ENCODE measurements at regions of chr10 and their contacts with region 1.

Region 1: DNA sequence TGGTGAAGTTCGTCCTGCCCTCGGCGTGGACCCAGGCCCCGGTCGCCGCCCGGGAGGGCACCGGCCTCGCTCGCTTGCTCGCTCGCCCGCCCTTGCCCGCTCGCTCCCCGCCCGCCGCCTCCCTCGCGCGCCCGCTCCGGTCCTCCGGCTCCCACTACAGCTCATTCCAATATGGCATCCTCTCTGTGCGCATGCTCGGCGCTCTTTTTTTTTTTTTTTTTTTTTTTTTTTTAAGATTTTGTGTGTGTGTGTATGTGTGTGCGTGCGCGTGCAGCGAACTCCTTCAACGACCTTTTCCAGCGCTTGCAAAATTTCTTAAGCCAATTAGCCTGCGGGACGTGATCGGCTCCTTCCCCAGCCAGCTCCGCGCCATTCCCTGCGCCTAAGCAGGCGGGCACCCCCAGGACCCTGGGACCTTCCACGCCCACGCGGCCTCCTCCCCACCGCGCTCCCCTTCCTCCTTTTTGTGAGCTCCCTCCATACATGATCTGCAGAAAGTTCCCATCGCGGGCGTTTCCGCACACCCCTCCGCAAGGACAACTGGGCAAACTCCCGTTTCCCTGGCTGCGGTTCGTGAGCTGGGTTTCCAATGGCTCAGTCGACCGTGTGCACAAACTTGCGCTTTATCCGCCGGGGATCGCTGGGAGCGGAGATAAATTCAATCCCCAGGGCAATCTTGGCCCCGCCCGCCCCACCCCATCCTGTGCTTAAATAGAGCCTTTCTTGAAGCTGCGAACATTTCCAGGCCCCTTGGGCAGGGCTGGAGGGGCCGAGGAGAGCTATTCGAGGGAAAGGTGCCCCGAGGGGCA is at the start of gene SFMBT2:
- DNase-seq: peak; percentile 64
- H3K4me3 ChIP-seq: peak within 1 kb of the TSS; percentile 53 to 71 (median 60)
- H3K27ac ChIP-seq: no peak within 1 kb of the TSS
- H3K4me1 ChIP-seq: peaks cover 29% of the 10 kb centered on the region
- H3K27me3 ChIP-seq: peaks cover 54% of the 10 kb centered on the region
- CTCF ChIP-seq: peak in 1 of 2 donors; percentile 27
- total RNA-seq, gene SFMBT2: 1.5 to 2.2 TPM

Region 2: GRCh38 chr10:6667679-6668270 is 743.3 kb before region 1 on chr10:
- CTCF ChIA-PET with region 1: interaction called, 21 read pairs
- dilution Hi-C with region 1: no loop called
- in situ Hi-C with region 1: loop called in 1 of 2 experiments (anchors 10 kb)
- intact Hi-C with region 1: no loop called
- DNase-seq: peak; percentile 37
- H3K4me3 ChIP-seq: no peak overlapping the region
- H3K27ac ChIP-seq: no peak overlapping the region
- H3K4me1 ChIP-seq: peaks cover 4% of the 10 kb centered on the region
- H3K27me3 ChIP-seq: peaks cover 2% of the 10 kb centered on the region
- CTCF ChIP-seq: peak; percentile 60 to 76

Region 3: GRCh38 chr10:6838118-6838517 is 572.9 kb before region 1 on chr10:
- CTCF ChIA-PET with region 1: no interaction called
- dilution Hi-C with region 1: no loop called
- in situ Hi-C with region 1: no loop called
- intact Hi-C with region 1: loop called (anchors 5 kb)
- DNase-seq: no peak
- H3K4me3 ChIP-seq: no peak overlapping the region
- H3K27ac ChIP-seq: no peak overlapping the region
- H3K4me1 ChIP-seq: no peaks in the 10 kb centered on the region
- H3K27me3 ChIP-seq: no peaks in the 10 kb centered on the region
- CTCF ChIP-seq: peak; percentile 26 to 45

Region 4: DNA sequence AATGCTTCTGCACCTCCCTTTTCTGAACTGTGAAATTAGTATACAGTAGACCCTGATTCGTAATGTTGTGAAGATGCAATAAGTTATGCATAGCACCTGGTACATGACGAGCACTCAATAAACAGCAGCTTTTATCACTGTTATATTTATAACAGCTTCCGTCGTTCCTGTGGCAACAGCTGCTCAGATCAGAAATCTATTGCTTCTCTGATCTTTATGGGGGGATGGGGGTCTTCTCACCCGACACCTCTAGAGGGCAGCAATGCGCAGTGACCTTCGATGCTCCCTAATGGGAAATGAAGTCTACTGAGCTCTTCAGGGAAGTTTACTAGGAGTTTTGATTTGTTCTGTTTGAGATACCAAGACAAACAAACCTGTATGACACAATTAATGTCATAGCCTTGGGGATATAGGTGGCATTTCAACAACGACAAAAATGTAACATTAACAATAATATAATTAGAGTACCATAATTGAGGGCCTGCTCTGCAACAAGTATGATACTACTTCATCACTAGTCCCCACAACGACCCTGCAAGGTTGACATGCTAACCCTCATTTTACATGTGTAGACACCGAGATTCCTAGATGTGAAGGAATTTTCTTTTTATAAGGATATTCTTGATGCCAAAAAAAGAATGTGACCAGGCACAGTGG is 289.8 kb before region 1 on chr10:
- CTCF ChIA-PET with region 1: interaction called, 9 read pairs
- dilution Hi-C with region 1: no loop called
- in situ Hi-C with region 1: no loop called
- intact Hi-C with region 1: loop called (anchors 1 kb)
- DNase-seq: peak; percentile 11
- H3K4me3 ChIP-seq: no peak overlapping the region
- H3K27ac ChIP-seq: no peak overlapping the region
- H3K4me1 ChIP-seq: no peaks in the 10 kb centered on the region
- H3K27me3 ChIP-seq: no peaks in the 10 kb centered on the region
- CTCF ChIP-seq: peak; percentile 34 to 45

Region 5: GRCh38 chr10:7432884-7433726 is 22.0 kb after region 1 on chr10:
- CTCF ChIA-PET with region 1: no interaction called
- dilution Hi-C with region 1: no loop called
- in situ Hi-C with region 1: no loop called
- intact Hi-C with region 1: no loop called
- DNase-seq: no peak
- H3K4me3 ChIP-seq: no peak overlapping the region
- H3K27ac ChIP-seq: no peak overlapping the region
- H3K4me1 ChIP-seq: no peaks in the 10 kb centered on the region
- H3K27me3 ChIP-seq: no peaks in the 10 kb centered on the region
- CTCF ChIP-seq: no peak

Region 6: GRCh38 chr10:7445474-7446185 is 34.6 kb after region 1 on chr10:
- CTCF ChIA-PET with region 1: no interaction called
- dilution Hi-C with region 1: no loop called
- in situ Hi-C with region 1: no loop called
- intact Hi-C with region 1: no loop called
- DNase-seq: no peak
- H3K4me3 ChIP-seq: no peak overlapping the region
- H3K27ac ChIP-seq: no peak overlapping the region
- H3K4me1 ChIP-seq: no peaks in the 10 kb centered on the region
- H3K27me3 ChIP-seq: no peaks in the 10 kb centered on the region
- CTCF ChIP-seq: no peak

Measured in mammary epithelial cell (primary cell).